ENCODE measurements at regions of chr21 and their contacts with region 1.

Region 1: GRCh38 chr21:15140321-15141019 is 75.7 kb upstream of the NRIP1 start:
- DNase-seq: peak; percentile 90 to 97
- H3K4me3 ChIP-seq: no peak overlapping the region
- H3K4me3 Mint-ChIP-seq: peak overlapping the region; percentile 58
- H3K27ac Mint-ChIP-seq: peak overlapping the region; percentile 85
- H3K4me1 ChIP-seq: peaks cover 49% of the 10 kb centered on the region
- H3K4me1 Mint-ChIP-seq: peaks cover 47% of the 10 kb centered on the region
- H3K27me3 ChIP-seq: no peaks in the 10 kb centered on the region
- H3K27me3 Mint-ChIP-seq: no peaks in the 10 kb centered on the region
- CTCF ChIP-seq: no peak

Region 2: GRCh38 chr21:14699433-14700416 is 440.7 kb before region 1 on chr21:
- CTCF ChIA-PET with region 1: no interaction called
- POLR2A ChIA-PET with region 1: no interaction called
- intact Hi-C with region 1: loop called (anchors 1 kb)
- DNase-seq: peak; percentile 66 to 75
- H3K4me3 ChIP-seq: no peak overlapping the region
- H3K4me3 Mint-ChIP-seq: peak overlapping the region; percentile 15
- H3K27ac Mint-ChIP-seq: peak overlapping the region; percentile 90
- H3K4me1 ChIP-seq: peaks cover 37% of the 10 kb centered on the region
- H3K4me1 Mint-ChIP-seq: peaks cover 18% of the 10 kb centered on the region
- H3K27me3 ChIP-seq: no peaks in the 10 kb centered on the region
- H3K27me3 Mint-ChIP-seq: no peaks in the 10 kb centered on the region
- CTCF ChIP-seq: no peak

Region 3: DNA sequence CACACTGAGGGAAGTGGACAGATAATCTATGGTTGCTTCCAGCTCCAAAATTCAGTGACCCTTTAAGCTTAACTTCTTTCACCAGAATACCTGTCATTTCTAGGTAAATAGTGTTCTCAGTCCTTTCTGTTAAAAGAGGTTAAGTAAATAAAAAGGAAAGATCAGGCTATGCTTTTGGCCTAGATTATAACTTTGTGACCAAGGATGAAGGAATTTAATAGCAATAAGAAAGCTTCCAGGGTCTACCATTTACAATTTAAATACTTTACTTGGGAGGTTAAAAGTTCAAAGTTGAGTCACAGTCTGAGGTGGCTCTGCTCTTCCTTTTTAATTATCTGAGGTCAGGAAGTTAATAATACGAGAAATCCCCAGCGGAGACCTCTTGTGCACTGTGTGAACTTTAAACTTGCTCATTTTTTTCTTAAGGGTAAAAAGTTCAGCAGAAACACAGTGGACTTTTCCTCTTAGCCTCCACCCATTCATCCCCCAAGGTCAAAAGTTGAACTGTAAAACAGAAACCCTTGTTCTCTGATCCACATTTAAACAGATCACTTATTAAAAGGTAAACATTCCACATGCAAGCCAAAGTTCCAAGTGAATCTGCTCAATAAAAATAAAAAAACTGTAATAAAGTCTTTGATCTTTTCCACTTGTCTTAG is 262.8 kb before region 1 on chr21:
- CTCF ChIA-PET with region 1: interaction called, 4 read pairs
- POLR2A ChIA-PET with region 1: no interaction called
- intact Hi-C with region 1: loop called (anchors 2 kb)
- DNase-seq: peak; percentile 46 to 53
- H3K4me3 ChIP-seq: no peak overlapping the region
- H3K4me3 Mint-ChIP-seq: no peak overlapping the region
- H3K27ac Mint-ChIP-seq: peak overlapping the region; percentile 45
- H3K4me1 ChIP-seq: peaks cover 61% of the 10 kb centered on the region
- H3K4me1 Mint-ChIP-seq: peaks cover 56% of the 10 kb centered on the region
- H3K27me3 ChIP-seq: no peaks in the 10 kb centered on the region
- H3K27me3 Mint-ChIP-seq: no peaks in the 10 kb centered on the region
- CTCF ChIP-seq: no peak

Region 4: DNA sequence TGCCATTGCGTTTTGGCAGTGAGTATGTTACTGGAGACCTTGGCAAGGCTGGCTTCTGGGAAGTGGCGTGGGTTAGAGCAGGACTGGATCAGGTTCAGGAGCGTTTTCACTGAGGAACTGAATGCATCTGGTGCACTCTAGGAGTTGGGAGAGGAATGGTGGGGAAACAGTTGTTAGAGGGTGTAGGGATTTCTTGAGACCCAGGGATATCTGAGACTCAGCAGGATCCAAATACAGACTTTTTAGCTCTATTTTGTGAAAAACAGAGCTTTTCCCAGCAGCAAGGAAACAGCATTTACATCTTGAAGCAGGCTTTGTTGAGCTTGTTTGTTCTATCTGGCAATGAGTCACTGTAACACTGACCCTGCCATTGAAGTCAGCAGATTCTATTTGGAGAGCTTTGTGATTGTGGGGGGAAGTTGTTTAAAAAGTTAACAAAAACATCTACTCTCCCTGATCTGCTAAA is 18.8 kb before region 1 on chr21:
- CTCF ChIA-PET with region 1: interaction called, 7 read pairs
- POLR2A ChIA-PET with region 1: no interaction called
- intact Hi-C with region 1: loop called (anchors 1 kb)
- DNase-seq: peak in 1 of 2 experiments; percentile 11
- H3K4me3 ChIP-seq: no peak overlapping the region
- H3K4me3 Mint-ChIP-seq: no peak overlapping the region
- H3K27ac Mint-ChIP-seq: peak overlapping the region; percentile 6
- H3K4me1 ChIP-seq: peaks cover 16% of the 10 kb centered on the region
- H3K4me1 Mint-ChIP-seq: peaks cover 16% of the 10 kb centered on the region
- H3K27me3 ChIP-seq: no peaks in the 10 kb centered on the region
- H3K27me3 Mint-ChIP-seq: no peaks in the 10 kb centered on the region
- CTCF ChIP-seq: no peak

Region 5: GRCh38 chr21:15159382-15160020 is 19.0 kb after region 1 on chr21:
- CTCF ChIA-PET with region 1: no interaction called
- POLR2A ChIA-PET with region 1: no interaction called
- intact Hi-C with region 1: no loop called
- DNase-seq: no peak
- H3K4me3 ChIP-seq: no peak overlapping the region
- H3K4me3 Mint-ChIP-seq: no peak overlapping the region
- H3K27ac Mint-ChIP-seq: no peak overlapping the region
- H3K4me1 ChIP-seq: peaks cover 19% of the 10 kb centered on the region
- H3K4me1 Mint-ChIP-seq: peaks cover 21% of the 10 kb centered on the region
- H3K27me3 ChIP-seq: no peaks in the 10 kb centered on the region
- H3K27me3 Mint-ChIP-seq: no peaks in the 10 kb centered on the region
- CTCF ChIP-seq: no peak

Region 6: DNA sequence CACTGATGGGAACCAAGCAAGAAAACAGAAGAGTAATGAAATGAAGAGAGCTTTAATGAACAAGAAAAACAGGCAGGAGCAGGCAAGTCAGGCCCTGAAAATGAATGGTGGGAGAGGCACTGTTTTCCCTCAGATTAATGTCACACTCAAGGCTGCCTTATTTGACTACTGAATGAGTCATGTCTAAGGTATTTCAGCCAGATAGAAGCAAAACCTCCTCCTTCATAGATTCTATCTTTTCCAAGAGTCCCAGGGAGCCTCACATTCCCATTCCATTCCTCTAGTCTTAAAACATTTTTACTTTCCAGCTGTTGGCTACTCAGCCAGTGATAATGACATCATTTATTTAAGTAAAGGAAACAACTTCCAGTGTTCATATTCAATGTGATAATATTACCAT is 152.8 kb after region 1 on chr21:
- CTCF ChIA-PET with region 1: no interaction called
- POLR2A ChIA-PET with region 1: no interaction called
- intact Hi-C with region 1: loop called (anchors 1 kb)
- DNase-seq: peak; percentile 45 to 59
- H3K4me3 ChIP-seq: no peak overlapping the region
- H3K4me3 Mint-ChIP-seq: peak overlapping the region; percentile 6
- H3K27ac Mint-ChIP-seq: peak overlapping the region; percentile 50
- H3K4me1 ChIP-seq: peaks cover 40% of the 10 kb centered on the region
- H3K4me1 Mint-ChIP-seq: peaks cover 34% of the 10 kb centered on the region
- H3K27me3 ChIP-seq: no peaks in the 10 kb centered on the region
- H3K27me3 Mint-ChIP-seq: no peaks in the 10 kb centered on the region
- CTCF ChIP-seq: no peak

Region 7: DNA sequence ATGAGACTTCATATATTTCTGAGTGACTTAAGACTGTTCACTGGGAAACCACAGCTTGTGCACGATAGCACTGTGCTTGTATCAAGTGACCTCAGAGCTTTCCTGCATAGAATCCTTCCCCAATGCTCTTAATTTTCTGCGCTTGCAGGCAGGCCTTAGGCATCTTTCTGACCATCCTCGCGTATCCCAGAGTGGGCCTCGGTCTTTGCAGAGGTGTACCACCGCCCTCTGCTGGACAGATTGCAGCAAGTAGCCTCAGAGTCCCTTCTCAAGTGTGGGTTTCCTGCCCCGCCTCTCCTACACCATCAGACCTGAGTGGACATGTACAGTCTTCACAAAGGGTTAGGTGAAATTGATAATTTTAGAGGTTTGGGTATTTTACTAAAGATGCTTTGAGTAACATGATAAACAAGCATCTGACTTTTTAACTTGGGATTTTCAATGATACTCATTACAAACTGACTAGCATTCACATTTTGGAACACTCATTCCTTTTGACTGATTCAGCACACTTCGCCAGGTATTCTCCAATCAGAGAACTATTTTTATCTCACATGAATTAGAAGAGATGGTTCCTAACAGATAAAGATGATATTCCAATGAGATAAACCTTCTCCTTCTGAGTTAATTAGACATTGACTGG is 342.8 kb after region 1 on chr21:
- CTCF ChIA-PET with region 1: no interaction called
- POLR2A ChIA-PET with region 1: no interaction called
- intact Hi-C with region 1: loop called (anchors 1 kb)
- DNase-seq: peak; percentile 83 to 86
- H3K4me3 ChIP-seq: no peak overlapping the region
- H3K4me3 Mint-ChIP-seq: no peak overlapping the region
- H3K27ac Mint-ChIP-seq: no peak overlapping the region
- H3K4me1 ChIP-seq: no peaks in the 10 kb centered on the region
- H3K4me1 Mint-ChIP-seq: no peaks in the 10 kb centered on the region
- H3K27me3 ChIP-seq: no peaks in the 10 kb centered on the region
- H3K27me3 Mint-ChIP-seq: no peaks in the 10 kb centered on the region
- CTCF ChIP-seq: peak; percentile 89 to 93

Measured in Caco-2 (cell line).